ENCODE measurements at regions of chr10 and their contacts with region 1.

Region 1: GRCh38 chr10:12455774-12456173 is 106.4 kb downstream of the CAMK1D start:
- DNase-seq: no peak
- H3K4me3 ChIP-seq: no peak overlapping the region
- H3K27ac ChIP-seq: no peak overlapping the region
- H3K4me1 ChIP-seq: no peaks in the 10 kb centered on the region
- H3K27me3 ChIP-seq: no peaks in the 10 kb centered on the region
- CTCF ChIP-seq: no peak
- POLR2A ChIP-seq: no peak

Region 2: DNA sequence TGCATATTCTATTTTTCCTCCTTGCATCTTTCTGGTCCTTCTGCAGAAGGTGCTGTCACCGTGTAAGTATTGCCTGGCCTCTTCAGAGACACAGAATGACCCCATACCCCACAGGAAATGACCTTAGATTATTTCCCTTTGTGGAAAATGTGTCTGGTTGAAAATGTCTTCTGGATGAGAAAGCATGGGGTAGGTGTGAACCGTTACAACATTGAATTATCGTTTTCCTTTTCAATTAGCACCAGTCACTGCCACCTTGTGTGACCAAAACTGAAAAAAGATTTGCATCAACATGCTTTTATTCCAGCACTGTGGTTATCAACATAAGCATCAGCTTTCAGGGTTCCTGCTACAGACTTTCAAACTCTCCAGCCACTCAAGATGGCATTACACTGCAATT is 1496.1 kb before region 1 on chr10:
- intact Hi-C with region 1: no loop called
- DNase-seq: no peak
- H3K4me3 ChIP-seq: no peak overlapping the region
- H3K27ac ChIP-seq: no peak overlapping the region
- H3K4me1 ChIP-seq: no peaks in the 10 kb centered on the region
- H3K27me3 ChIP-seq: no peaks in the 10 kb centered on the region
- CTCF ChIP-seq: no peak
- POLR2A ChIP-seq: no peak

Region 3: GRCh38 chr10:11898372-11899066 is 557.3 kb before region 1 on chr10:
- intact Hi-C with region 1: no loop called
- DNase-seq: peak; percentile 84 to 91
- H3K4me3 ChIP-seq: no peak overlapping the region
- H3K27ac ChIP-seq: peak overlapping the region; percentile 69 to 82
- H3K4me1 ChIP-seq: no peaks in the 10 kb centered on the region
- H3K27me3 ChIP-seq: no peaks in the 10 kb centered on the region
- CTCF ChIP-seq: no peak
- POLR2A ChIP-seq: no peak

Region 4: DNA sequence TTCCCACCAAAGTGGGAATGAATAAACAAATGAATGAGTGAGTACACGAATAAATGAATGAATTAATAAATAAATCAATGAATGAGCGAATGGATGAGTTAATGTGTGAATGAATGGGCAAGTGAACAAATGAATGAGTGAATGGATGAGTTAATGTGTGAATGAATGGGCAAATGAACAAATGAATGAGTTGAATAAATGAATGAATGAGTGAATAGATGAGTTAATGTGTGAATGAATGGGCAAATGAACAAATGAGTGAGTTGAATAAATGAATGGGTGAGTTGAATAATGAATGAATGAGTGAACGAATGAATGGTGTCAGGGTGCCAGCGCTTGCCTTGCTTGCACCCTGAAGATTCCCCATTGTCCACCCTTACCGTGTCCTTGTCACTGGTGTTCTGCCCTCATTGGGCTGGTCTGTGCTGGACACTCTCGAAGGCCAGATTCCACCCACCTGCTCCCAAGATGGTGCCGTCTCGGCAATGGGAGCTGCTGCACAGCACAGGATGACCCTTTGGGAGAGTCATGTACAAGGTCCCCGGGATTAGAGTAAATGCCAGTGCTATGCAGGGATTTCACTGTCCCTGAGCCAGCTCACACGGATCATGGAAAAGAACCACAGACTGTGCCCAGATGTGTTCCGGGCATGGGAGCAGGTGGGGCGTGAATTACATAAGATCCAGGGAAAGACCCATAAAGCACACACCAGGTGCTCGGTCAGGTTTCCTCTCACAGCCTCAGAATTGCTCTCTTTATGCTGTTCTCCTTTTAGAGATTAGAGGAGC is 23.2 kb before region 1 on chr10:
- intact Hi-C with region 1: loop called (anchors 1 kb)
- DNase-seq: no peak
- H3K4me3 ChIP-seq: no peak overlapping the region
- H3K27ac ChIP-seq: no peak overlapping the region
- H3K4me1 ChIP-seq: no peaks in the 10 kb centered on the region
- H3K27me3 ChIP-seq: no peaks in the 10 kb centered on the region
- CTCF ChIP-seq: no peak
- POLR2A ChIP-seq: no peak

Region 5: GRCh38 chr10:14185316-14186045 is 1729.7 kb after region 1 on chr10:
- intact Hi-C with region 1: no loop called
- DNase-seq: no peak
- H3K4me3 ChIP-seq: no peak overlapping the region
- H3K27ac ChIP-seq: no peak overlapping the region
- H3K4me1 ChIP-seq: no peaks in the 10 kb centered on the region
- H3K27me3 ChIP-seq: peaks cover 0 to 6% of the 10 kb centered on the region in 2 donors
- CTCF ChIP-seq: no peak
- POLR2A ChIP-seq: no peak